ENCODE measurements at regions of chr12 and their contacts with region 1.

Region 1: DNA sequence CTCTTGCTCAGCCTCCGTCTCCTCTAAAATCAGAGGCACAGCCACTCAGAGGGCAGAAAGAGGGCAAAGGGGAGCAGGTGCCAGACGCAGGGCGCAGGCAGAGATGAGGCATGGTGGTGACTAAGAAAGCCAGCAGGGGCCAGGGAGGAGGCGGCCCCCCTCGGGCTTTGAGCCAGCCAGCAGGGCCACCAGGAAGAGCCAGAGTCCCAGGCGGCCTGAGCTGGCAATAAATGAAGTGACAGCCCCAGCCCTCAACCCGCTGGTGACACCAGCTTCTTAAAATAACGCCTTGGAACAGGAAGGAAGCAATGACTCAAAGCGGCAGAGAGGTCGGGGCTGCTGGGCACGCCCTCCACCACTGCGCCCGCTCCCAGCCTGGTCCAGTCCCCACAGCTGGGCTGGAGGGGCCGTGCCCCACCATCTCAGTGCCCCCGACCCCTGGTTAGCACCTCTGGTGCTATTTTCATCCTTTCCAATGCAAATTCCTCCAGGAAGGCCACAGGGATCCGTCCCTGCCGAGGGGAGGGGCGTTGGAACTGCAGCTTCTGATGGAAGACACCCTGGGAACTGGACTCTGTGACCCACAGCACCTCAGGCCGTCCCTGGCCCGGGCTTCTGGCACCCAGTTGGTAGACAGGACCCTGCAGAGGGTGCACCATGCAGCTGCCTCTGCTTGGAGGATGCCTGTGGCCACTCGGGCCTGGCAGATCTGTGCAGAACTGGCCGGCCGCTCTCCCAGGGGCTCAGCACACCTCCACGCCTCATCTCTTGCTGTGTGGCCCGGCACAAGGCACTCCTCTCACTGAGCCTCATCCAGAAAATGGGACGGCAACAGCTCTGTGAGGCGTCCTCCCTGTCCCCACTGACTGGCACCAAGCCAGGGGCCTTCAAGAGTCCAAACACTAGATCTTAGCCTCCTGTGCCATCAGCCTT is 113.7 kb downstream of the NCOR2 start:
- DNase-seq: peak; percentile 93
- H3K4me3 Mint-ChIP-seq: no peak overlapping the region
- H3K27ac Mint-ChIP-seq: no peak overlapping the region
- H3K4me1 Mint-ChIP-seq: peaks cover 57% of the 10 kb centered on the region
- H3K27me3 Mint-ChIP-seq: no peaks in the 10 kb centered on the region

Region 2: GRCh38 chr12:124356221-124356620 is 97.5 kb before region 1 on chr12:
- CTCF ChIA-PET with region 1: no interaction called
- intact Hi-C with region 1: no loop called
- DNase-seq: no peak
- H3K4me3 Mint-ChIP-seq: no peak overlapping the region
- H3K27ac Mint-ChIP-seq: no peak overlapping the region
- H3K4me1 Mint-ChIP-seq: no peaks in the 10 kb centered on the region
- H3K27me3 Mint-ChIP-seq: no peaks in the 10 kb centered on the region

Region 3: DNA sequence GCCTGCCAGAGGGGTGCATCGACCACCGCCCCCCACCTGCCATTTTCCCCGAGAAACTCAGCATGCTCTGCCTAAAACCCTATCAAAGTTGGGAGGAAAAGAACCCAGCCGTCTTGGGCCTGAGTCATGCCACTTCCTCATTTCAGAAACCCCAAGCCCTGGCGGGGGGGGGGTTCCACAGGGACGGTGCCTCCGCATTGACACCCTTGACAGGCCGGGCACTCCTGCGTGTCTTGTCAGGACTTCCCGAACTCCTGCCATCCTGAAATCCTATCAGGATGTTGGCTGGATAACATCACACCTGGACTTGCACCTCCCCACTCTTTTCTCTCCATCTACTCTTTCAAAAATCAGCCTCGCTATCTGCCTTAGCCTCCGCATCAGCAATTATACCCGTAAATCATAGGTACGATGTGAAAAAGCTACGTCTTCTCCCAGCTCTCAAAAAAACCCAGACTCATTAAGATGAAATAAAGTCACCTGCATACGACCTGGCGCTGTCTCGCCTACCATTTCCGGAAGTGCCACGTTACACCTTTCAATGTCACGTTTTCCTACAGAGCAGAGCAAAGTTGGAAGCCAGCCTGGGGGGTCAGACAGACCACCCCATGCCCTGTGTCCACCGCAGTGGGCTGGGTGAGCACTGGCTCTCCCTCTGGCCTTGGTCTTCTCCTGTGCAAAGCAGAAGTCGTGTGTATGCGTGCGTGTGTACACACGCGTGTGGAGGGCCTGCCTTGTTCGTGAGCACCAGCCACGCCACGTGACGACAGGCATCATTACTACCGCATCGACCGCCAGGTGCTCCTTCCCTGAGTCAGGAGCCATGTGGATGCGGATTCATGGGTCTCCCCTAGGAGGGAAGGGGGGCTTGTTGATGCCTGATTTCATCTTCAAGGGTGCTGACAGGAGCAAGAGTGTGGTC is 62.1 kb before region 1 on chr12:
- CTCF ChIA-PET with region 1: no interaction called
- intact Hi-C with region 1: loop called (anchors 1 kb)
- DNase-seq: peak; percentile 77
- H3K4me3 Mint-ChIP-seq: peak overlapping the region; percentile 16
- H3K27ac Mint-ChIP-seq: peak overlapping the region; percentile 88
- H3K4me1 Mint-ChIP-seq: peaks cover 34% of the 10 kb centered on the region
- H3K27me3 Mint-ChIP-seq: no peaks in the 10 kb centered on the region

Region 4: DNA sequence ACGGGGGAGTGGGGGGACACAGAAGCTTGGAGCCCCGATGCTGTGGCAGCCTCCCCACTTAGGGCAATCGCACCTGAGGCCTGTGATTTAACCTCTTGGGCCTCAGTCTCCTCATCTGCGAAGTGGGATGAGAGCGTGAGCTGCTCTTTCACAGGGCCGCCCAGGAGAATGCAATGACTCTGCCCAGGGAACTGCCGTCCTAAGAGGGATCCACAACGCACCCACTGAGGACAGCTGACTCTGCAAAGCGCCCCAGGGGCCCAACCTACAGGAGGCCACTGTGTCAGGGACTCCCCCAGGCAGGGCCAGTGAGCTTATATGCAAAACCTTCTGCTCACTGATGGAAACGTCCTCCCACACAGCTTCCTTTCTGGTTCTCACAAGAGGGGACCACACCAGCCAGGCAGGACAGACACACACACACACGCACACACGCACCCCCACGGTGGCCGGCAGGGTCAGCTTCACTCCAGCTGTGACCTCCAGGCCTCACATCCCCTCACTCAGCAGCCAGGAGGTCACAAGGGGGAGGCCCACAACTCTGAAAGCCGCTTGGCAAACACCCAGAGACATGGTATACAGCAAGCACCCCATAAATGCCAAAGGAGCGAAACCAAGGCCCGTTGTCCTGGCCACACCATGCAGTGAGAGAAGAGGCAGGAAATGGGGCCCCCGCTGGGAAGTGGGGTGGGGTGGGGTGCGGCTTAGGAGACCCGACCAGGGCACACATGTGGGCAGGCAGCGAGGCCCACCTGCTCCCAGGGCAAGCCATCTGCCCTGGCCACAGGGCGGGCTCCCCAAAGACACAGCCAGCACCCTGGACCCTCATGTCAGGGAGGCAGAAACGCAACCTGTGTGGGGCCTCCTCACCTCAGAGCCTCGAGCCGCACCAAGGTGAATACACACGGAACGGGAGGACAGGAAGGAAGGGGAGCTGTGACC is 40.4 kb after region 1 on chr12:
- CTCF ChIA-PET with region 1: interaction called, 3 read pairs
- intact Hi-C with region 1: loop called (anchors 1 kb)
- DNase-seq: peak; percentile 78
- H3K4me3 Mint-ChIP-seq: no peak overlapping the region
- H3K27ac Mint-ChIP-seq: peak overlapping the region; percentile 82
- H3K4me1 Mint-ChIP-seq: peaks cover 40% of the 10 kb centered on the region
- H3K27me3 Mint-ChIP-seq: no peaks in the 10 kb centered on the region

Region 5: GRCh38 chr12:124636138-124636978 is 182.7 kb after region 1 on chr12:
- CTCF ChIA-PET with region 1: no interaction called
- intact Hi-C with region 1: loop called (anchors 1 kb)
- DNase-seq: peak; percentile 89
- H3K4me3 Mint-ChIP-seq: no peak overlapping the region
- H3K27ac Mint-ChIP-seq: no peak overlapping the region
- H3K4me1 Mint-ChIP-seq: peaks cover 20% of the 10 kb centered on the region
- H3K27me3 Mint-ChIP-seq: no peaks in the 10 kb centered on the region

Region 6: GRCh38 chr12:124727264-124727721 is 273.6 kb after region 1 on chr12:
- CTCF ChIA-PET with region 1: no interaction called
- intact Hi-C with region 1: no loop called
- DNase-seq: no peak
- H3K4me3 Mint-ChIP-seq: no peak overlapping the region
- H3K27ac Mint-ChIP-seq: no peak overlapping the region
- H3K4me1 Mint-ChIP-seq: no peaks in the 10 kb centered on the region
- H3K27me3 Mint-ChIP-seq: no peaks in the 10 kb centered on the region